Vagina (tissue), 2 donors: ENCODE measurements at regions of chr15 and their contacts with region 1.

Region 1: DNA sequence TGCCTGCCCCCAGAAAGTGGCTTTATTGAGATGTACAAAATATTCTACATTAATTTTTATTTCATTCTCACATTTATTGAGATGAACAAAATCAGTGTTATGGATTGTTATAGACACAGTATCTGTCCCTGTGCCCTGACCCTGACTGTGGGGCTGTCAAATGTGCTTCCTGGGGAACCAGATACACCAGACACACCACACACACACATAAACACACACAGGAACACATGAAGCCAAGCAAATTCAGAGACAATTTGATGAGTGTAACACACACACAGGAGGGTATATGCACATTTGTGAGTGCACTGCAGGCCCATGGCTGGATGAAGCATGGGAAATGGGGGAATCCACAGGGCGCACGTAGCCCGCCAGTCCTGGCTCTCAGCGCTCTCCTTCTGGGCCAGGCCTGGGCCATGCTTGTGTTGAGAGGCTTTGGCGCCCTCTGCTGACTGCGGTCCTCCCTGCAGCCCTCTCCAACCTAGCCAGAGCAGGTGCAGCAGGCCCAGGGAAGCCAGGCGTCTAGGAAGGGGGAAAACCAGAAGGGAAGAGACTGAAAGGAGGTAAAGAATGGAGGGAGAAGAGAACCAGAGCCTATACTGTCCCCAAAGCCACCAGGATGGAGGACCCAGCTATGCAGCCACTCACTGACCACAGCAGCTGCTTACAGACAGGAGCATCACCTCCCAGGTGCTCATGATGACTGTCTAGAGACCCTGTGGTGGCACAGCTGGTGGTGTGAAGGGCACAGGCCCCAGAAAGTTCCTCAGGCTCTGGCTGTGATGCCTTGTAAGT is 18.0 kb upstream of the LOXL1 start:
- DNase-seq: no peak
- H3K4me3 ChIP-seq: no peak overlapping the region
- H3K27ac ChIP-seq: no peak overlapping the region
- H3K4me1 ChIP-seq: no peaks in the 10 kb centered on the region
- H3K27me3 ChIP-seq: no peaks in the 10 kb centered on the region
- CTCF ChIP-seq: peak; percentile 80 to 87 (median 84)
- POLR2A ChIP-seq: no peak

Region 2: DNA sequence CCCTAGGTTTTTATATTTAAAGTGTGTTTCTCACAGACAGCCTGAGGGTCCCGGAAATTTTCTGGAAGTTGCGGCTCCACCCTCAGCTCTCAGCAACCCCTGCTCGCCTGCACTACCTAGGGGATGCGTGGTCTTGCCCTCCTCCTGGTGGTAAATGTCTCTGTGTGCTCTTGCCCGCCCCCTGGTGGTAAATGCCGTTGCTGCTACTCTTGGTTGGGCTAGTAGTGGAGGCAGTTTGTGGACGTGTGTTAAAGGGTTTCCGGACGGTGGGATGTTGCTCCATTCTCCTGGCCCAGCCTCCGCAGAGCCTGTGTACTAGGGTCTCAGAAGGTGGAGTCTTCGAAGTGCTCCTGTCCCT is 56.5 kb after region 1 on chr15:
- intact Hi-C with region 1: loop called (anchors 10 kb)
- DNase-seq: no peak
- H3K4me3 ChIP-seq: no peak overlapping the region
- H3K27ac ChIP-seq: no peak overlapping the region
- H3K4me1 ChIP-seq: no peaks in the 10 kb centered on the region
- H3K27me3 ChIP-seq: no peaks in the 10 kb centered on the region
- CTCF ChIP-seq: peak; percentile 87 to 96 (median 94)
- POLR2A ChIP-seq: no peak